MCF 10A (cell line): ENCODE measurements at regions of chr18 and their contacts with region 1.

Region 1: GRCh38 chr18:12890506-12890905 is 6.5 kb upstream of the PTPN2 start:
- DNase-seq: peak; percentile 51
- H3K4me3 Mint-ChIP-seq: no peak overlapping the region
- H3K27ac Mint-ChIP-seq: peak overlapping the region; percentile 85
- H3K4me1 Mint-ChIP-seq: peaks cover 5% of the 10 kb centered on the region
- H3K27me3 Mint-ChIP-seq: no peaks in the 10 kb centered on the region
- CTCF ChIP-seq: no peak

Region 2: DNA sequence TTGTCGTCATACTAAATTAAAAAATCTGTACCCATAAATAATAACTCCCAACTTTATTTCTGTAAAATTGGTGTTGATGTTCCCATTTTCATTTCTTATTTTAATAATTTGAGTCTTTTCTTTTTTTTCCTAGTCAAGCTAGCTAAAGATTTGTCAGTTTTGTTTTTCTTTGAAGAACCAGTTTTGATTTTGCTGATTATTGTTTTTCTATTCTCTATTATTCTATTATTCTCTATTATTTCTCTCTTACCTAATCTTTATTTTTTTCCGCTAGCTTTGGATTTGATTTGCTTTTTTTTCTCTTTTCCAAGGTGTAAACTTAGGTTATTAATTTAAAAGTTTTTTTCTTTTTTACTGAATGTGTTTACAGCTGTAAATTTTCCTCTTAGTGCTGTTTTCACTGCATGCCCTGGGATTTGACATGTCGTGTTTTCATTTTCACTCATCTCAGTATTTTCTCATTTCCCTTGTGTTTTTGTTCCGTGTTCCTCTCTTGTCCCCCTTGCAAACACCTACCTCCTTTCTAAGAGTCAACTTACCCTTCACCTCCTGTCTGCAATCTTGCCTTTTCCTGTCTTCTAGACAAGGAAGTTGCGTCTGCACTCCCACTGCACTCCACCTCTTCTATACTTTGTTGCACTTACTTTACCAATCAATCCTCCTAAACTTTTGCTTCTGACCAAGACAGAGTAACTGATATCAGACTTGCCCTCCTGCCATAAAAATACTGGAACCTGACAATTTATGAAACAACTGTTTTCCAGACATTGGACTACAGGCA is 168.8 kb before region 1 on chr18:
- CTCF ChIA-PET with region 1: interaction called, 22 read pairs
- POLR2A ChIA-PET with region 1: interaction called, 4 read pairs
- intact Hi-C with region 1: no loop called
- DNase-seq: no peak
- H3K4me3 Mint-ChIP-seq: no peak overlapping the region
- H3K27ac Mint-ChIP-seq: no peak overlapping the region
- H3K4me1 Mint-ChIP-seq: no peaks in the 10 kb centered on the region
- H3K27me3 Mint-ChIP-seq: no peaks in the 10 kb centered on the region
- CTCF ChIP-seq: no peak

Region 3: GRCh38 chr18:12726774-12727550 is 163.5 kb before region 1 on chr18:
- CTCF ChIA-PET with region 1: interaction called, 22 read pairs
- POLR2A ChIA-PET with region 1: interaction called, 5 read pairs
- intact Hi-C with region 1: loop called (anchors 1 kb)
- DNase-seq: peak; percentile 67
- H3K4me3 Mint-ChIP-seq: no peak overlapping the region
- H3K27ac Mint-ChIP-seq: no peak overlapping the region
- H3K4me1 Mint-ChIP-seq: peaks cover 7% of the 10 kb centered on the region
- H3K27me3 Mint-ChIP-seq: no peaks in the 10 kb centered on the region
- CTCF ChIP-seq: peak; percentile 87

Region 4: GRCh38 chr18:12783524-12783923 is 107.0 kb before region 1 on chr18:
- CTCF ChIA-PET with region 1: interaction called, 12 read pairs
- POLR2A ChIA-PET with region 1: no interaction called
- intact Hi-C with region 1: no loop called
- DNase-seq: no peak
- H3K4me3 Mint-ChIP-seq: no peak overlapping the region
- H3K27ac Mint-ChIP-seq: peak overlapping the region; percentile 10
- H3K4me1 Mint-ChIP-seq: peaks cover 10% of the 10 kb centered on the region
- H3K27me3 Mint-ChIP-seq: no peaks in the 10 kb centered on the region
- CTCF ChIP-seq: no peak

Region 5: DNA sequence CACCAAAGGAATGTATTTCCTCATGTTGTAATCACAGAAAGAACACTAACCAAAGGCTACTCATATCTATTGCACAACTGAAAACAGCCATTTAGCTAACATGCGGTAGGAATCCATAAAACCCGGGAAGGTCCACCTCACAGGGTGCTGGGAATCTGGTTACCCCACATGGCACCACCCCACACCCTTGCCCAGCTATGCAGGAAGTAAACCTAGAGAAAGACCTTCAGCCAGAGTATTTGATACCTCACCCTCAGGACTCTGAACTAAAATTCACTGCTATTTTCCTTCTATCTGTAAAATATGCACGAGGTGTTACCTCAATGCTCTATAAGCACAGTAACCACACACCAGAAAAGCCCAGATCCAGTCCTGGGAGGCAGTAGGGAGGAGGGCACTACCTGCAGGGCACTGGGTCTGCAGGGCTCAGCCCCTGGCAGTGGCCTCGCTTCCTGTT is 52.3 kb before region 1 on chr18:
- CTCF ChIA-PET with region 1: interaction called, 6 read pairs
- POLR2A ChIA-PET with region 1: interaction called, 22 read pairs
- intact Hi-C with region 1: no loop called
- DNase-seq: peak; percentile 97
- H3K4me3 Mint-ChIP-seq: peak overlapping the region; percentile 64
- H3K27ac Mint-ChIP-seq: peak overlapping the region; percentile 87
- H3K4me1 Mint-ChIP-seq: peaks cover 36% of the 10 kb centered on the region
- H3K27me3 Mint-ChIP-seq: no peaks in the 10 kb centered on the region
- CTCF ChIP-seq: no peak

Region 6: GRCh38 chr18:12921178-12921577 is 30.7 kb after region 1 on chr18:
- CTCF ChIA-PET with region 1: interaction called, 14 read pairs
- POLR2A ChIA-PET with region 1: no interaction called
- intact Hi-C with region 1: no loop called
- DNase-seq: no peak
- H3K4me3 Mint-ChIP-seq: no peak overlapping the region
- H3K27ac Mint-ChIP-seq: no peak overlapping the region
- H3K4me1 Mint-ChIP-seq: no peaks in the 10 kb centered on the region
- H3K27me3 Mint-ChIP-seq: no peaks in the 10 kb centered on the region
- CTCF ChIP-seq: no peak

Region 7: GRCh38 chr18:13159579-13159978 is 269.1 kb after region 1 on chr18:
- CTCF ChIA-PET with region 1: no interaction called
- POLR2A ChIA-PET with region 1: no interaction called
- intact Hi-C with region 1: no loop called
- DNase-seq: peak; percentile 69
- H3K4me3 Mint-ChIP-seq: no peak overlapping the region
- H3K27ac Mint-ChIP-seq: no peak overlapping the region
- H3K4me1 Mint-ChIP-seq: no peaks in the 10 kb centered on the region
- H3K27me3 Mint-ChIP-seq: peaks cover 12% of the 10 kb centered on the region
- CTCF ChIP-seq: peak; percentile 78